ENCODE measurements at regions of chr17 and their contacts with region 1.

Region 1: DNA sequence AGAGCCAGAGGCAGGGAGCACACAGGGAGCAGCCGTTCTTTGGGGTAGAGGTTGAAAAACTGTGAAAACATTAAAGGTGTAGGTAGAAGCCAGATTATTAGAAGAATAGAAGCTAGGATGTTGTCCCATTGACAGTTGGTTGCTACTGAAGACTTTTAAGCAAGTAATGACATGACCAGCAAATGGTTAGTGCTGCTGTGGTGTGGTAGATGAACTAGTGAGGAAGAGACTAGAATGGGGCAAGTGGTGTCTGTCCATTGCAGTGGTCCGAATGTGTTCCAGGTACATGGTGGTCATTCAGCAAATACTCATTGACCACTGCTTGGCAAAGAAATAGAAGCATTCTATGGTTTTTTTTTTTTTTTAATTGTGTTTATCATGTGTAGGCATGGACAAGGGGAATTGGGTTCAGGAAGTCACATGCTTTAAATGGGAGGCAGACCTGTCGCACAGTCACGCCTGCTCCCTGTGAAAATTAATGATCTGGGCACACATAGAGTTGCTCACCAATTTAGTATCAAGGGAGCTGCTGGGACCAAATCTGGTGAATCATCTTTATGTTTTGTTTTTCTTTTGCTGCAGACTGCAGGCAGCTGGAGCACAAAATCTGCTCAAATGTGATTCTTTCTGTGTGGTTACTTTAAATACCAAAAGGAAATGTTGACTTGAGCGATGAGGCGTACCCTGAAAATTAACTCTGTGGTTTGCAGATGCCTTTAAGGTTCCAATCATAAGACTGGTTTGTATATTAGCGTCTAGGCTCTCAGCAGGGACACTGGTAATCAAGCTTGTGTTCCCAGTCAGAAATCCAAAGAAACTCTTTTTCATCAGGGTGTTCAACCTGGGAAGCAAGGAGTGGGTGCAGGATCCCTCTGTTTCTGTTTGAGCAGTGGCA is 30.7 kb downstream of the YPEL2 start:
- DNase-seq: no peak
- ATAC-seq: peak; percentile 77
- H3K4me3 Mint-ChIP-seq: peak overlapping the region; percentile 42
- H3K27ac Mint-ChIP-seq: peak overlapping the region; percentile 87
- H3K4me1 Mint-ChIP-seq: peaks cover 84% of the 10 kb centered on the region
- H3K27me3 Mint-ChIP-seq: no peaks in the 10 kb centered on the region
- CTCF ChIP-seq: no peak

Region 2: GRCh38 chr17:59084154-59084553 is 278.0 kb before region 1 on chr17:
- CTCF ChIA-PET with region 1: no interaction called
- POLR2A ChIA-PET with region 1: no interaction called
- intact Hi-C with region 1: no loop called
- DNase-seq: no peak
- ATAC-seq: no peak
- H3K4me3 Mint-ChIP-seq: no peak overlapping the region
- H3K27ac Mint-ChIP-seq: no peak overlapping the region
- H3K4me1 Mint-ChIP-seq: no peaks in the 10 kb centered on the region
- H3K27me3 Mint-ChIP-seq: no peaks in the 10 kb centered on the region
- CTCF ChIP-seq: no peak

Region 3: GRCh38 chr17:59347975-59348391 is 14.2 kb before region 1 on chr17:
- CTCF ChIA-PET with region 1: interaction called, 3 read pairs
- POLR2A ChIA-PET with region 1: interaction called, 47 read pairs
- intact Hi-C with region 1: loop called (anchors 1 kb)
- DNase-seq: no peak
- ATAC-seq: no peak
- H3K4me3 Mint-ChIP-seq: no peak overlapping the region
- H3K27ac Mint-ChIP-seq: peak overlapping the region; percentile 68
- H3K4me1 Mint-ChIP-seq: peaks cover 83% of the 10 kb centered on the region
- H3K27me3 Mint-ChIP-seq: no peaks in the 10 kb centered on the region
- CTCF ChIP-seq: no peak

Measured in activated B cell treated with CpG ODN at 0.5 μM for 24 hours (primary cell).